H1 (cell line): ENCODE measurements at regions of chr12 and their contacts with region 1.

Region 1: GRCh38 chr12:124002021-124002644 is 29.1 kb downstream of the ZNF664 start:
- DNase-seq: no peak
- H3K4me3 ChIP-seq: no peak overlapping the region
- H3K27ac ChIP-seq: no peak overlapping the region
- H3K4me1 ChIP-seq: no peaks in the 10 kb centered on the region
- H3K27me3 ChIP-seq: no peaks in the 10 kb centered on the region
- CTCF ChIP-seq: no peak
- EP300 ChIP-seq: no peak
- POLR2A ChIP-seq: no peak
- RAD21 ChIP-seq: no peak

Region 2: GRCh38 chr12:123931686-123932321 is 70.3 kb before region 1 on chr12:
- CTCF ChIA-PET with region 1: no interaction called
- POLR2A ChIA-PET with region 1: no interaction called
- DNase-seq: no peak
- H3K4me3 ChIP-seq: no peak overlapping the region
- H3K27ac ChIP-seq: no peak overlapping the region
- H3K4me1 ChIP-seq: no peaks in the 10 kb centered on the region
- H3K27me3 ChIP-seq: peaks cover 0 to 2% (median 0%) of the 10 kb centered on the region in 4 experiments; a peak in 1 of 7 replicates
- CTCF ChIP-seq: peak in 2 of 3 experiments; percentile 30 to 39; a peak in 2 of 4 replicates
- EP300 ChIP-seq: no peak
- POLR2A ChIP-seq: no peak
- RAD21 ChIP-seq: peak; percentile 15 to 30; a peak in 2 of 4 replicates

Region 3: GRCh38 chr12:123983822-123984485 is 18.2 kb before region 1 on chr12:
- CTCF ChIA-PET with region 1: interaction called, 13 read pairs
- POLR2A ChIA-PET with region 1: no interaction called
- DNase-seq: no peak
- H3K4me3 ChIP-seq: no peak overlapping the region
- H3K27ac ChIP-seq: no peak overlapping the region
- H3K4me1 ChIP-seq: no peaks in the 10 kb centered on the region
- H3K27me3 ChIP-seq: no peaks in the 10 kb centered on the region
- CTCF ChIP-seq: peak; percentile 9 to 87 (median 75)
- EP300 ChIP-seq: no peak
- POLR2A ChIP-seq: no peak
- RAD21 ChIP-seq: peak; percentile 89 to 93

Region 4: DNA sequence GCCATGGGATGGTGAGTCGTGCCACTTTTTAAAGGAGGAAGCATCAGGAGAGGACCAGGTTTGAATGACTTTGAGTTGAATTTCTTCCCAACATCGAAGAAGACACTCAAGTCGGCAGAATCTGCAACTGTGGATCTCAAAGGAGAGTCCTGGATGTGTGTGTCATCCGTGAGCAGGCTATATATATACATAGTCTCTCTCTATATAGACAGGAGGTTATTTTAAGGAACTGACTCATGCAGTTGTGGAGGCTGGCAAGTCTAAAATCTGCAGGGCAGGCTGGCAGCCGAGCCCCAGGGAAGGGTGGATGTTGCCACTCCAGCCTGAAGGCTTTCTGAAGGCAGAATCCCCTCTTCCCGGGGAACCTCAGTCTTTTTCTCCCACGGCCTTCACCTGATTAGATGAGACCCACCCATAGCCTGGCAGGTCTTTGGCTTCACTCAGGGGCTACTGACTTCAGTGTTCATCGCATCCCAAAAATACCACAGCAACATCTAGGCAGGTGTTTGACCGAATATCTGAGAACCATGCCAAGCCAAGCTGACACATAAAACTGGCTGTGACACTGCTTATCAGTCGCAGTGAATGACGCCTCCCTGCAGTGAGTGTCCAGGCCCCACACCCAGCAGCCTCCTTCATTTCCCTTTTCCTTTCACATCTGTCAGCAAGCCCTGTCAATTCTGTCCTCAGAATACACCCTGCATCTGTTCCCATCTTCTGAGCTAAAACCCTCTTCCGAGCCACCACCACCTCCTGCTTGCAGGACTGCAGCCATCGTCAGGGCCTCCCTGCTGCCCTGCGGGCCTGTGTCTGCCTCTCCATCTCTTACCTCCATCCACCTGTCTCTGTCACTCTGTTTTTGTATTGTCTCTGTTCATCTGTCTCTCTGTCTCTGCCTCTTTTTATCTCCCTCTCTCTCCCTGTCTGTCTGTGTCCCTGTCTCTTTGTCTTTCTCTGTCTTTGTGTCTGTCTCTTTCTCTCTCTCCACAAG is 24.9 kb after region 1 on chr12:
- CTCF ChIA-PET with region 1: no interaction called
- POLR2A ChIA-PET with region 1: no interaction called
- DNase-seq: peak in 1 of 2 experiments; percentile 23
- H3K4me3 ChIP-seq: no peak overlapping the region
- H3K27ac ChIP-seq: no peak overlapping the region
- H3K4me1 ChIP-seq: peaks cover 0 to 2% (median 0%) of the 10 kb centered on the region in 4 experiments; a peak in 3 of 7 replicates
- H3K27me3 ChIP-seq: no peaks in the 10 kb centered on the region; a peak in 1 of 7 replicates
- CTCF ChIP-seq: no peak
- EP300 ChIP-seq: no peak
- POLR2A ChIP-seq: no peak
- RAD21 ChIP-seq: no peak